A549 (cell line): ENCODE measurements at regions of chr11 and their contacts with region 1.

Region 1: DNA sequence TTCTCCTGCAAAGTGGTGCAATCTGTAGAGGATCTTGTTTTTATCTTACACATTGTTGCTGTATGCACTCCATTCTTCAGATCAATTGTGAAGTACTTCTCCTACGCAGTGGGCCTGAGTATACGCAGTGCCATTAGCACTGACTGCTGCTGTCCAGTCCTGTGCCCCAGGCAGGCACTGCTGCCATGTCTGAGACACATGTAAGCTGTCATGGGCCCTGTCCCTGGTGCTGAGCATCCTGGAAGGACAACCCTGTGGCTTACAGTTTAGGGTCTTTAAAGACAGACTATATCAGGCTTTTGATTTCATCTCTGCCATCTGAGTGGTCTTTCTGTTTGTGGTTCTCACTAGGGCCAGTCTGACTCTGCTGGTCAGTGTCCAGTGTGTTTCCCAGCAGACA is 44.8 kb upstream of the PTPN5 start:
- DNase-seq: no peak
- ATAC-seq: peak in 1 of 2 experiments; percentile 54; a peak in 1 of 6 replicates
- H3K4me3 ChIP-seq: no peak overlapping the region
- H3K27ac ChIP-seq: no peak overlapping the region
- H3K4me1 ChIP-seq: no peaks in the 10 kb centered on the region
- CTCF ChIP-seq: no peak
- EP300 ChIP-seq: no peak
- POLR2A ChIP-seq: no peak
- RAD21 ChIP-seq: no peak

Region 2: DNA sequence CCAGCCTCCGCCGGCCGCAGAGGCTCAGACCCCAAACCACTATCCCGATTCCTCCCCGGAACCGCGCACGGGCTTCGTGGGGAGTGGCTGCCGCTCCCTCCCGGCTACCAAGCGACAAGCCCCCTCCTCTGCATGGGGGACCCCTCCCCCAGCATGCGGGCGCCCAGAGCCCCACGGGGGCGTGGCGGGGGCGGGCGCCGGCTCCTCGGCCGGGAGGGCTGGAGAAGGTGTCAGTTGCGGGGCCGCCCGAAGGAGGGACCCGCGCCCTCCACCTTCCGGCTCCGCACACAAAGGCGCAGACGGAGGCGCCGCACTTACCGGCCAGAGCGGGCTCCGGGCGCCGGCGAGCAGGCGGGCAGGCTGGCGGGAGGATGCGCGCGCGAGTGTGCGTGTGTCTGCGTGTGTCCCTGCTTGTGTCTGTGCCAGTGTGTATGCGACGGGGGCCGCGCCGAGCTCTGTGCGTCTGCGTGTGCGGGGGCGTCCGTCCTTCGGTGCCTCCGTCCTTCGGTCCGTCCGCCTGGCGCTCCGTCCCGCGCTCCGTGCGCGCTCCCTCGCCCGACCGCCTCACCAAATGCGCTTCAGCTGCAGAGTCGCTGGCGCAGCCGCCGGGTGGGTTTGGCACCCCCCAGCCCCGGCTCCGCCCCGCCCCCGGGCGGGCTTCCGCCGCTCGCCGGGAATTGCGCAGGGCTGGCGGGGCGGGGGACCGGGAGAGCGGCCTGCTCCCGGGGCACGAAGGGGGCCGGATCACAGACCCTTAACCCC is 45.0 kb before region 1 on chr11 and contains the start of gene PTPN5:
- CTCF ChIA-PET with region 1: no interaction called
- POLR2A ChIA-PET with region 1: no interaction called
- DNase-seq: peak in 1 of 2 experiments; percentile 34
- ATAC-seq: peak; percentile 32 to 68; a peak in 3 of 6 replicates
- H3K4me3 ChIP-seq: peak within 1 kb of the TSS; percentile 54
- H3K27ac ChIP-seq: peak within 1 kb of the TSS in 1 of 2 experiments; percentile 17; a peak in 1 of 6 replicates
- H3K4me1 ChIP-seq: peaks cover 5% of the 10 kb centered on the region; the same call in 1 of the 3 replicates
- CTCF ChIP-seq: no peak
- EP300 ChIP-seq: no peak
- POLR2A ChIP-seq: no peak
- RAD21 ChIP-seq: no peak
- polyA plus RNA-seq, gene PTPN5: 0.04 TPM in 1 of 2 replicates, not detected in the other

Region 3: DNA sequence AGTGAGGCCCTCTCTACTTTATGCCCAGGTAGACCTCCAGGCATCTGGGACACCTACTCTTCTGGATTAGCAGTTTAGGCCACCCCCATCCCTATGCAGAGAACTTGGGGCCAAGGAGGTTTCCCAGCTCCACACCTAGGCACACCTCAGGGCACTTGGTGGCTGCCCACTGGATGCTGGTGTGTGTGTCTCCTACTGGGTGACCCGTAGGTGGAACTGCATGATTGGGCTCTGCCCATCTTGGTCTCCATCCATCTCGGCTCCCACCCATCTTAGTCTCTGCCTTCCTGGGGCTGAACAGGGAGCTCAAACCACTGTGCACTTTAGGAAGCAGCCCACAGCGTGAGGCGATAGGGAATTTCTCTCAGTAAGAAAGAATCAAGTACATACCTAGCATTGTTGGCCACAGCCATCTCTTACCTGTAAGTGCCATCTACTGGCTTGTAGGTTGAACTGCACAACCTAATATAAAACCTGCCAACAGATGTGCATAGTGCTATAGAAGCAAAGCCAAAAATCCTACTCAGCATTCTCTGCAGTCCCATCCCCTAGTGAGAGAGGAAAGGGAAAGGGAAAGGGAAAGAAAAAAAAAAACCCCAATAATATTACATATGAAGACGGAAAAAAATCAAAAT is 16.8 kb after region 1 on chr11:
- CTCF ChIA-PET with region 1: interaction called, 11 read pairs
- POLR2A ChIA-PET with region 1: no interaction called
- DNase-seq: peak; percentile 10 to 57
- ATAC-seq: peak; percentile 89 to 93
- H3K4me3 ChIP-seq: no peak overlapping the region
- H3K27ac ChIP-seq: no peak overlapping the region
- H3K4me1 ChIP-seq: no peaks in the 10 kb centered on the region
- CTCF ChIP-seq: peak; percentile 58
- EP300 ChIP-seq: no peak
- POLR2A ChIP-seq: no peak
- RAD21 ChIP-seq: peak; percentile 63 to 75

Region 4: GRCh38 chr11:18927550-18928322 is 91.3 kb after region 1 on chr11:
- CTCF ChIA-PET with region 1: no interaction called
- POLR2A ChIA-PET with region 1: no interaction called
- DNase-seq: no peak
- ATAC-seq: no peak
- H3K4me3 ChIP-seq: no peak overlapping the region
- H3K27ac ChIP-seq: no peak overlapping the region
- H3K4me1 ChIP-seq: no peaks in the 10 kb centered on the region
- CTCF ChIP-seq: no peak
- EP300 ChIP-seq: no peak
- POLR2A ChIP-seq: no peak
- RAD21 ChIP-seq: no peak